ENCODE measurements at regions of chr17 and their contacts with region 1.

Region 1: DNA sequence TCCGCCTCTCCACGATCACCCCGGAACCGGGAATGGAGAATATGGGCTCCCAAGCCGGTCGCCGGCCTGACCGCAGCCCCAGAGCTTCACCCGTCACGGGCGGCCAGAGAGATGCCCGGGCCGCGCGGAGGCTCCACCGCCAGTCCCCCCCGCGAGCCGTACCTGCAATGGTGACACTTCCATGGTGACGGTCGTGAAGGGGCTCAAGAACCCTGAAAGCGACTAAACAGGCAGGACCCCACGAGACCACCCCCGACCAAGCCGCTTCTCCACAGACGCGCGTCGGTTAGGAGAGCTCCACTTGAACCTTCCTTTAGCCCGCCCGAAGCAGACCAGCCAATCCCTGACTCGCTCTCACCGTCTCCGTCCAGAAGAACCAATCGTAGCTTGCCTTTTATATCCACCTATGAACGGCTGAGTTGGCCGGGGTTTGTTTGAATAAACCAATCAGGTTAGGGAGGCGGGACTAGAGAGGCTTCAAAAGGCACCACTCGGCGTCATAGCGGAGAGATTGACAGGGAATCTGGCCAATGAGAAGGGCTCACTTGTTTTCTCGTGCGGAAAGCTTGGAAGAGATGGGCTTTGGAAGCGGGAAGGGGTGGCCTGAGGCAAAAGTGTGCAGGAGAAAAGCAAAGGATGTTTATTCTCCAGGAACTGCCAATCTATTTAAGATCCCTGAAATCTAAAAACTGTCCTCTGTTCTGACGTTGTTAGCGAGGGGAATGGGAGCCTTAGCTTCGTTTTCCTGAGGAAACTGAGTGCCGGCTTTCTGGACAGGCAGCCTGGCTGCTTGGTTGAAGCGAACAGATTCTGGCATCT is at the start of gene TOP2A:
- DNase-seq: peak; percentile 100
- ATAC-seq: peak; percentile 95 to 96
- H3K4me3 ChIP-seq: peak within 1 kb of the TSS; percentile 68
- H3K27ac ChIP-seq: peak within 1 kb of the TSS; percentile 79 to 92
- H3K4me1 ChIP-seq: peaks cover 39% of the 10 kb centered on the region
- CTCF ChIP-seq: no peak
- EP300 ChIP-seq: no peak
- POLR2A ChIP-seq: peak; percentile 62
- RAD21 ChIP-seq: no peak
- polyA plus RNA-seq, gene TOP2A: 273 and 416 TPM in 2 replicates

Region 2: GRCh38 chr17:40333781-40334448 is 83.9 kb before region 1 on chr17:
- CTCF ChIA-PET with region 1: no interaction called
- POLR2A ChIA-PET with region 1: no interaction called
- DNase-seq: no peak
- ATAC-seq: no peak
- H3K4me3 ChIP-seq: no peak overlapping the region
- H3K27ac ChIP-seq: peak overlapping the region; percentile 66 to 79; a peak in 5 of 6 replicates
- H3K4me1 ChIP-seq: peaks cover 74% of the 10 kb centered on the region
- CTCF ChIP-seq: no peak
- EP300 ChIP-seq: no peak
- POLR2A ChIP-seq: no peak
- RAD21 ChIP-seq: no peak

Region 3: DNA sequence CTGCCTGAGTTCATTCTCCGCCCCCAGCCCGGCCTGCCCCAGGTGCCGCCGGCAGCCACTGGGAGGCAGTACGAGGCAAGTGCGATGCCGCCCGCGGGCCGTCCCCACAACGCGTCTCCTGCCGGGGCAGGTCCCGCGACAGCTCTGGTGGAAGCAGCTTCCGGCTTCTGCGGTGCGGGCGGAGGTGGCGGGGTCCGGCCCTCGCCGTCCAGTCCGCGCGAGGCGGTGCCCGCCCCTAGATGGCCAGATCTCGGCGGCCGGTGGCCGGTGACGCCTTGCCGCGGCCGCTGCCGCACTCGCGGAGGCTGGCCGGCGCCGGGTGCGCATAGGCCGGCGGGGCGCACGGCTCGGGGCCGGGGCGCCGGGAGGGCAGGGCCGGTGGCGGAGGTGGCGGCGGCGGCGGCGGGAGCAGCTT is 55.1 kb before region 1 on chr17:
- CTCF ChIA-PET with region 1: interaction called, 284 read pairs
- POLR2A ChIA-PET with region 1: interaction called, 14 read pairs
- DNase-seq: peak; percentile 93 to 97
- ATAC-seq: peak; percentile 83 to 86
- H3K4me3 ChIP-seq: peak overlapping the region; percentile 61
- H3K27ac ChIP-seq: peak overlapping the region; percentile 84 to 95
- H3K4me1 ChIP-seq: peaks cover 30% of the 10 kb centered on the region
- CTCF ChIP-seq: peak; percentile 85
- EP300 ChIP-seq: no peak
- POLR2A ChIP-seq: peak; percentile 74
- RAD21 ChIP-seq: peak; percentile 73 to 85

Region 4: DNA sequence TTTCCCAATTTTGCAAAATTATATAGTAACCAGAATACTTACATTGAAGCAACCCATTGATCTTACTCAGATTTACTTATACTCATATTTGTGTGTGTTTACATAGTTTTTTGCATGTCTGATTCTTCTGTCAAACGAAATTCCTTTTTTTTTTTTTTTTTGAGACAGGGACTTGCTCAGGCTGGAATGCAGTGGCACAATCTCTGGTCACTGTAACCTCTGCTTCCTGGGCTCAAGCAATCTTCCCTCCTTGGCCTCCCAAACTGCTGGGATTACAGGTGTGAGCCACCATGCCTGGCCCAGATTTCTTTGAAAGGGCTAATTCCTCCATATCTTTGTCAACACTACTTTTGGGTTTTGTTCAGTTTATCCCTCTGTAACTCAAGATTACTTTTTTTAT is 30.1 kb before region 1 on chr17:
- CTCF ChIA-PET with region 1: interaction called, 20 read pairs
- POLR2A ChIA-PET with region 1: interaction called, 3 read pairs
- DNase-seq: no peak
- ATAC-seq: no peak
- H3K4me3 ChIP-seq: no peak overlapping the region
- H3K27ac ChIP-seq: no peak overlapping the region
- H3K4me1 ChIP-seq: no peaks in the 10 kb centered on the region
- CTCF ChIP-seq: no peak
- EP300 ChIP-seq: no peak
- POLR2A ChIP-seq: no peak
- RAD21 ChIP-seq: no peak

Region 5: DNA sequence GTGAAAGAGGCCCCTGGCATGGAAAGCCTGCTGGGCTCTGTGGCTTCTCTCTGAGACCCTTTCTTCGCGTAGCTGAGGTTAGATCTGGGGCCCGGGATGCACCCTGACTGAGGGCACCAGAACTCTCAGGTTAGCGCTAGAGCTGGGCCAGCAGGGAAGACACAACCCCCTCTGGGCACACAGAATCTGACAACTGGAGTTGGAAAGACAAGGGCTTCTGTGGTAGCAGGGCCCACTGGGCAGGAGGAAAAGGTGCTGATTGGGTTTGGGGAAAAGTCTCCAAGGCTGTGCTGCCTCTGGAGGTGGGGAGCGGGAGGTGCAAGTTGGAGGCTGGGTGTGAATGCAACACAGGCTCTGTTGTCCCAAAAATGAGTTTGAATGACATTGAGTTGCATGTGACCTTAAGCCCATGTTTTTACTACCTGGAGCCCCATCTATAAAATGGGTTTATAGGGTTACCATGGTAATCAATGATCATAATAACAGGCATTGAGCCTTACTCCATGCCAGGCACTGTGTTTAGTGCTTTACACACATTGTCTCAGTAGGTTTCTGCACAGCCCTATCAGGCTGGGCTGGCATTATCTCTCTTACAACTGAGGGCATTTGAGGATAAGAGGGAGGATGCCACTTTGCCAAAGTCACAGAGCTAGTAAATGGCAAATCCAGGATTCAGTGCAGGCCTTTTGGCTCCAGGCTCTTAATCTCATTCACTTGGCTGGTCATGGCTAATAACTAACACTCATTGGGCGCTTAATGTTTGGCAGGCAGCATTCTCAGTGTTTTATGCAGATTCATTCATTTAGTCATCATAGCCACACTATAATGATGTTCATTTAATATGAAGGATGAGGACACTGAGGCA is 16.0 kb after region 1 on chr17:
- CTCF ChIA-PET with region 1: interaction called, 99 read pairs
- POLR2A ChIA-PET with region 1: no interaction called
- DNase-seq: peak in 1 of 2 experiments; percentile 66
- ATAC-seq: peak; percentile 86 to 93
- H3K4me3 ChIP-seq: no peak overlapping the region
- H3K27ac ChIP-seq: peak overlapping the region in 1 of 2 experiments; percentile 25; a peak in 3 of 6 replicates
- H3K4me1 ChIP-seq: 0 out of 3 replicates have a peak, but pooled peaks cover 3% of the 10 kb centered on the region
- CTCF ChIP-seq: peak; percentile 33; the same call in 2 of the 3 replicates
- EP300 ChIP-seq: no peak
- POLR2A ChIP-seq: no peak
- RAD21 ChIP-seq: peak in 1 of 2 experiments; percentile 50; a peak in 3 of 5 replicates

Region 6: DNA sequence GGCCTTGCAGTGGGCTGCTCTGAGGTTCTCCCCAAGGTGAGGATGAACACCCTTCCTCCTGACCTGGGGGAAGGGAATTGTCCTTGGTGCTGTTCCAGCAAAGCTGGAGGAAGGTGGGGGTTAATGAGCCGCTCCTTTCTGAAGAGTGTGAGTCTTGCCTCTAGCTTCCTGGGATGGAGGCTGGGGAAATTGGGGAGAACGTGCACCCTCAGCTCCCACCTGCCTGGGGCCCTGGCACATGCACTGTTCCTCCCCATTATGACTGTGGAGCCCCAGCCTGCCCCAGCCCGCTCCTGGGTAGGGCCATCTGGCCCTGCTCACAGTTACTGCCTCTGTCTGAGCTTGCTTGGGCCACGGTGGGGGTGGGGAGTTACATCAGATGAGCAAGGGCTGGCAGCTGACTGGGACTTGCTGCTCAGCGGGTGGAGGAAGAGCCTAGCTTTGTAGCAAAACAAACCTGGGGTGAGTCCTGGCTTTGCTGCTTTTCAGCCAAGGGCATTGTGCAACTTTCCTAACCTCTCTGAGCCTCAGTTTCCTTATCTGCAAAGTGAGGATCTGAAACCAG is 72.6 kb after region 1 on chr17:
- CTCF ChIA-PET with region 1: no interaction called
- POLR2A ChIA-PET with region 1: no interaction called
- DNase-seq: peak in 1 of 2 experiments; percentile 76
- ATAC-seq: peak in 1 of 2 experiments; percentile 1; a peak in 2 of 6 replicates
- H3K4me3 ChIP-seq: no peak overlapping the region
- H3K27ac ChIP-seq: peak overlapping the region; percentile 96 to 97
- H3K4me1 ChIP-seq: peaks cover 98% of the 10 kb centered on the region
- CTCF ChIP-seq: no peak
- EP300 ChIP-seq: 0 out of 5 replicates have a peak, but pooled peaks have one; percentile 1 to 15
- POLR2A ChIP-seq: no peak
- RAD21 ChIP-seq: no peak

Region 7: DNA sequence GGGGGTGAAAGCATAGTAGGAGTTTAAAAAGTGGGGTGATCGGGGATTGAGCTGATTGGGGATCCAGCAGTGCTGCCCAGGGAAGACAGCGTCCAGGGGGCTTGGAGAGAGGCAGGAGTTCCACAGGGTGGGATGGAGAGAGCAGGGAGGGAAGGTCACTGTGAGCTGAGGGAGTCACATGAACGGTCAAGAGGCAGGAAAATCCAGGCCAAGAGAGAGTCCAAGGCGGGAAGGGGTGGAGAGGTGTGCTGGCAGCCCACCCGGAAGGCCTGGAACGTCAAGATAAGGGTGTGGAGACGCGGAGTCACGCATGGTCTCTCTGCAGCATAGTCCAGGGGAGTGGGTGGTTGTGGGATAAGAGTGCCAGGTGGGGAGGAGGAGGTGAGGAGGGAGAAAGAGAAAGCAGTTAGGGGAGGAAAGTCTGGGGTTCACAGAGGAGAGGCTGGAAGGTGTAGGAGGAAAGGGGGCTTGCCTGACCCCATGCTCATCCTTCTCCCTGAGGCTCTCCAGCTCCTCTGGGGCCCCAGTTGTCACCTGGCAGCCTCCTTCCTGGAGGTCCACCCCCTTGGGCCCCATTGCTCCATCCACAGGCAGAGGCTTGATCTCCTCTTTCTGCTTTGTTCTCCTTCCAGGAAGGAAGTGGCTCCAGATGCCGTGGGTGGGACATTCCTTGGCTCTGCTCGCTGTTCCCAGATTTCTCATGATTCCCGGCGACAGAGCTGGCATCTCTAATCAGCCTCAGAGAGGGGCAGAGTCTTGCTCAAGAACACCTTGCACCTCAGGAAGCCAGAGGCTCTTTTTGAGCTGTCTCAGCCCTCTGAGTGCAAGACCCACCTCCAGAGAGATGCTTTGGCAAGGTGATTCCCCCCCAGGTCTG is 118.7 kb after region 1 on chr17:
- CTCF ChIA-PET with region 1: interaction called, 105 read pairs
- POLR2A ChIA-PET with region 1: interaction called, 10 read pairs
- DNase-seq: peak in 1 of 2 experiments; percentile 83
- ATAC-seq: peak in 1 of 2 experiments; percentile 5; a peak in 3 of 6 replicates
- H3K4me3 ChIP-seq: no peak overlapping the region
- H3K27ac ChIP-seq: peak overlapping the region; percentile 95 to 99
- H3K4me1 ChIP-seq: peaks cover 77% of the 10 kb centered on the region
- CTCF ChIP-seq: no peak
- EP300 ChIP-seq: peak; percentile 87 to 91; a peak in 3 of 5 replicates
- POLR2A ChIP-seq: no peak
- RAD21 ChIP-seq: no peak

Region 8: GRCh38 chr17:40714473-40714872 is 296.7 kb after region 1 on chr17:
- CTCF ChIA-PET with region 1: no interaction called
- POLR2A ChIA-PET with region 1: no interaction called
- DNase-seq: peak in 1 of 2 experiments; percentile 33
- ATAC-seq: 0 out of 6 replicates have a peak, but pooled peaks of 1 of the 2 experiments have one; percentile 39
- H3K4me3 ChIP-seq: no peak overlapping the region
- H3K27ac ChIP-seq: no peak overlapping the region
- H3K4me1 ChIP-seq: no peaks in the 10 kb centered on the region
- CTCF ChIP-seq: no peak
- EP300 ChIP-seq: no peak
- POLR2A ChIP-seq: no peak
- RAD21 ChIP-seq: peak; percentile 20 to 30; a peak in 2 of 5 replicates

Measured in A549 (cell line).